IMR-90 (cell line): ENCODE measurements at regions of chr10 and their contacts with region 1.

Region 1: GRCh38 chr10:26805567-26806245 is 55.1 kb downstream of the ABI1 start:
- DNase-seq: peak; percentile 77
- ATAC-seq: peak; percentile 82
- H3K4me3 ChIP-seq: no peak overlapping the region
- H3K27ac ChIP-seq: no peak overlapping the region
- H3K4me1 ChIP-seq: peaks cover 2% of the 10 kb centered on the region
- H3K27me3 ChIP-seq: no peaks in the 10 kb centered on the region
- CTCF ChIP-seq: no peak
- POLR2A ChIP-seq: no peak
- RAD21 ChIP-seq: no peak

Region 2: DNA sequence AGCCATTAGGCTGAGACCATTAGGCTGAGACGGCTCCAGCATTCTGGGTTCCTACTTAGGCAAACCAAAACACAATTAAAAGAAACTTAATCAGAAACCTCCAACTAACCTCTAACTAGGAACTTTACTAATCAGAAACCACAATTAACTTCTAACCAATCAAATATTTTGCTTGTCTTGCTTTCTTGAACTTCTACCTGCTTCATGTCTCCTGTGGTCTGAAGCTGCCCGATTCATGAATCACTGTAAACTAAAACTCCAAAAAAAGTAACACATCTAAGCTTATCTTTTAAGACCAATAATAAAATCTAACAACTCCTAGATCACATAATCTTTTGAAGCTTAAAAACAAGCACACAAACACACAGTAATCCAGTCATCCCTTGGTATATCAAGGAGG is 32.1 kb before region 1 on chr10:
- CTCF ChIA-PET with region 1: interaction called, 3 read pairs
- POLR2A ChIA-PET with region 1: no interaction called
- dilution Hi-C with region 1: no loop called
- in situ Hi-C with region 1: no loop called
- intact Hi-C with region 1: loop called (anchors 5 kb)
- DNase-seq: peak; percentile 18
- ATAC-seq: no peak
- H3K4me3 ChIP-seq: no peak overlapping the region
- H3K27ac ChIP-seq: no peak overlapping the region
- H3K4me1 ChIP-seq: no peaks in the 10 kb centered on the region; the same call in 1 of the 2 replicates
- H3K27me3 ChIP-seq: no peaks in the 10 kb centered on the region
- CTCF ChIP-seq: no peak
- POLR2A ChIP-seq: no peak
- RAD21 ChIP-seq: no peak

Region 3: DNA sequence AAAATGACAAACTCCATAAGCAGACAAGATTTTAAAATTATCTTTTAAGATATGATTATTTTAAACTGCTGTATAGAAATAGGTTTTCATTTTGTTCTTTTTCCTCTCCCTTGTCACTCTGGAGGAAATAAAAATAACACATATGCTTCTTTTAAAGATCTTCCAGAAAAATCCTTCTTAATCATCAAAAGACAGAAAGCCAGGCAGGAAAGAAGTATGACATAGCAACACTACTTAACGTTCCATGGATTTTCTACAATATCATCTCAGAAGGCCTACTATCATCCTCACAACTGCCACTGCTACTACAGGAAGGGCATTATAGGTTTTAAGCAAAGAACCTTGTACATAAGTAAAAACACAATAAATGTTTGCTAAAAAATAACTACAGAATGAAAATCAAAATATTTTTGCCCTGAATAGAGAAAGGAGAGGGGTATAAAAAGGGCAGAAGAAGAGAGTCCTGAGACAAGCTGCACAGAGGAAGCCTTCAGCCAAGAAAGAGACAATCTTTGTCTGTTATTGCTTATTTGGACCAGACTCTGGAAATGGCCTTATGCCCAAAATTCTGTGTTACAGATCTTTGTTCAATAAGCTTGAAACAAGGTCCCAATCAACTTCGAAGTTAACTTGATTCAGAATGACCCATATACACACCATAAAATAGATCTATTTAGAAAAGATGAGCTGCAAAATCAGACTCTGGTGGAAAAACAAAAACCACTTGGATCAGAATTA is 12.8 kb before region 1 on chr10:
- CTCF ChIA-PET with region 1: no interaction called
- POLR2A ChIA-PET with region 1: no interaction called
- dilution Hi-C with region 1: no loop called
- in situ Hi-C with region 1: no loop called
- intact Hi-C with region 1: loop called (anchors 1 kb)
- DNase-seq: no peak
- ATAC-seq: no peak
- H3K4me3 ChIP-seq: no peak overlapping the region
- H3K27ac ChIP-seq: no peak overlapping the region
- H3K4me1 ChIP-seq: peaks cover 2% of the 10 kb centered on the region; the same call in 1 of the 2 replicates
- H3K27me3 ChIP-seq: no peaks in the 10 kb centered on the region
- CTCF ChIP-seq: no peak
- POLR2A ChIP-seq: no peak
- RAD21 ChIP-seq: no peak

Region 4: GRCh38 chr10:26839966-26840627 is 34.4 kb after region 1 on chr10:
- CTCF ChIA-PET with region 1: no interaction called
- POLR2A ChIA-PET with region 1: no interaction called
- dilution Hi-C with region 1: no loop called
- in situ Hi-C with region 1: no loop called
- intact Hi-C with region 1: loop called (anchors 5 kb)
- DNase-seq: peak; percentile 74
- ATAC-seq: peak; percentile 60
- H3K4me3 ChIP-seq: no peak overlapping the region
- H3K27ac ChIP-seq: no peak overlapping the region
- H3K4me1 ChIP-seq: peaks cover 5% of the 10 kb centered on the region
- H3K27me3 ChIP-seq: no peaks in the 10 kb centered on the region
- CTCF ChIP-seq: no peak
- POLR2A ChIP-seq: no peak
- RAD21 ChIP-seq: no peak

Region 5: GRCh38 chr10:26860443-26861204 is 54.9 kb after region 1 on chr10 and contains the start of gene ABI1:
- CTCF ChIA-PET with region 1: no interaction called
- POLR2A ChIA-PET with region 1: no interaction called
- dilution Hi-C with region 1: no loop called
- in situ Hi-C with region 1: no loop called
- intact Hi-C with region 1: no loop called
- DNase-seq: peak; percentile 98
- ATAC-seq: peak; percentile 92
- H3K4me3 ChIP-seq: peak within 1 kb of the TSS; percentile 86
- H3K27ac ChIP-seq: peak within 1 kb of the TSS; percentile 83
- H3K4me1 ChIP-seq: 0 out of 2 replicates have a peak, but pooled peaks cover 2% of the 10 kb centered on the region
- H3K27me3 ChIP-seq: peaks cover 5% of the 10 kb centered on the region
- CTCF ChIP-seq: no peak
- POLR2A ChIP-seq: peak; percentile 86
- RAD21 ChIP-seq: no peak
- total RNA-seq, gene ABI1: 60.8 and 71.3 TPM in 2 replicates

Region 6: GRCh38 chr10:26909746-26910145 is 104.0 kb after region 1 on chr10:
- CTCF ChIA-PET with region 1: no interaction called
- POLR2A ChIA-PET with region 1: no interaction called
- dilution Hi-C with region 1: no loop called
- in situ Hi-C with region 1: no loop called
- intact Hi-C with region 1: no loop called
- DNase-seq: no peak
- ATAC-seq: no peak
- H3K4me3 ChIP-seq: no peak overlapping the region
- H3K27ac ChIP-seq: no peak overlapping the region
- H3K4me1 ChIP-seq: no peaks in the 10 kb centered on the region; the same call in 1 of the 2 replicates
- H3K27me3 ChIP-seq: no peaks in the 10 kb centered on the region
- CTCF ChIP-seq: no peak
- POLR2A ChIP-seq: no peak
- RAD21 ChIP-seq: no peak